ENCODE measurements at regions of chr13 and their contacts with region 1.

Region 1: GRCh38 chr13:34748073-34748472 is 194.0 kb upstream of the NBEA start:
- DNase-seq: peak; percentile 52
- H3K4me3 Mint-ChIP-seq: no peak overlapping the region
- H3K27ac Mint-ChIP-seq: peak overlapping the region; percentile 94
- H3K4me1 Mint-ChIP-seq: no peaks in the 10 kb centered on the region
- H3K27me3 Mint-ChIP-seq: no peaks in the 10 kb centered on the region
- CTCF ChIP-seq: no peak

Region 2: DNA sequence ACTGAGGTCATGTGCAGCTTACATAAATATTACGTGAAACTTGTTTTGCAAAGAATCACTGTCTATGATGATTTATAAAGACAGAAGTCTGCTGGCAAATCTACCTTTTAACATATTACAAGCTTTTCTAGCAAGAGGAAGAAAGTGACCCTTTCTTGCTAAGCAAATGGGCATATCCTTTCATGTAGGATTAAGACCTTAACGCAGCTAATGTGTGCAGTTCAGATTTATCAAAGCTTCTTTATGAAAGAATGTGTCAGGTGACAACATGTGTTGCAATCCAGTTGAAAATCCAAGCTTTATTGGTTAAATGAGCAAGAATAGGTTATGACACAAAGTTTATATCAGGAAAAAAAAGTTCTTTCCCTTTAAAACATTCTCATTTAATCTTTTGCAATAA is 78.4 kb after region 1 on chr13:
- CTCF ChIA-PET with region 1: no interaction called
- intact Hi-C with region 1: loop called (anchors 2 kb)
- DNase-seq: no peak
- H3K4me3 Mint-ChIP-seq: no peak overlapping the region
- H3K27ac Mint-ChIP-seq: no peak overlapping the region
- H3K4me1 Mint-ChIP-seq: peaks cover 9% of the 10 kb centered on the region
- H3K27me3 Mint-ChIP-seq: no peaks in the 10 kb centered on the region
- CTCF ChIP-seq: no peak

Region 3: DNA sequence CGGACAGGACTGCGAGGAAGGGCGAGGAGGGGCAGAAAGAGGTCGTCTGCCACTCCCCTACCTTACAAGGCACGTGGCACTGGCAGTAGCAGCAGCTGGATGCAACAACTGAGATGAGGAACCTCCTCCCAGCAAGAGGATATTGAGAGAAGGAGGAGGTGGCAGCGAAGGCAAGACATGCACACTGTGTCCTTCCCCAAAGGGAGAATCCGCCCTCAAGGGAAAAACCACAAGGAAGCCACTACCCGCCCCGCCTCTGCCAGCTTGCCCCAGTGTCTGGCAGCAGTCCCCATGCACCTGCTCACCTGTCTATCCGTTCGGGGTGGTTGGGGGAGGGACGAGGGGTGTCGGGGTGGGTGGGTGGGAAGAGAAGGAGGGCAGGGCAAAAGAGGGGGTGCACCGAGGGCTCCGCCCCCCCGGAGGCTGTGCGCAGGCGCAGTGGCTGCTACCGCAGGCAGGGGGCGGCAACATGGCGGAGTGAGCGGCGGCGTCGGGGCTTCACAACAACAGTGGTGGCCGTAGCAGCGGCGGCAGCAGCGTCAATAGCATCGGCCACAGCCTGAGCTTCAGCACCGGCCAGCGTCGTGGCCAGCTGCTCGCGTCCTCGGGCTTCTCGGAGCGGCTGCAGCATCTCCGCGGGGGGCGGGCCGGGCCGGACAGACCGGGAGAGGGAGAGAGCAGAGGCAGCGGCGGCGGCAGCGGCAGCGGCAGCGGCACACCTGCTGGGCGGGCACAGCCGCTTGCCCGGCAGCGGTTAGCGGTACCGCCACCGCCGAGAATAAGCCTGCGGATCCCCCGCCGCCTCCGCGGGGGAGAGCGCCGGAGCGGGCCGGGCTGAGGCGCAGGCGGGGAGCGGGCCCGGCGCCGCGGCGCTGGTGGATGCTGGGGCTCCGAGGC is 194.0 kb after region 1 on chr13 and contains the start of gene NBEA:
- CTCF ChIA-PET with region 1: no interaction called
- intact Hi-C with region 1: loop called (anchors 5 kb)
- DNase-seq: peak; percentile 91
- H3K4me3 Mint-ChIP-seq: peak within 1 kb of the TSS; percentile 68
- H3K27ac Mint-ChIP-seq: peak within 1 kb of the TSS; percentile 84
- H3K4me1 Mint-ChIP-seq: no peaks in the 10 kb centered on the region
- H3K27me3 Mint-ChIP-seq: no peaks in the 10 kb centered on the region
- CTCF ChIP-seq: no peak
- total RNA-seq, gene NBEA: 18.0 and 21.4 TPM in 2 replicates

Measured in Calu3 (cell line).